SK-N-SH (cell line): ENCODE measurements at regions of chr4 and their contacts with region 1.

Region 1: DNA sequence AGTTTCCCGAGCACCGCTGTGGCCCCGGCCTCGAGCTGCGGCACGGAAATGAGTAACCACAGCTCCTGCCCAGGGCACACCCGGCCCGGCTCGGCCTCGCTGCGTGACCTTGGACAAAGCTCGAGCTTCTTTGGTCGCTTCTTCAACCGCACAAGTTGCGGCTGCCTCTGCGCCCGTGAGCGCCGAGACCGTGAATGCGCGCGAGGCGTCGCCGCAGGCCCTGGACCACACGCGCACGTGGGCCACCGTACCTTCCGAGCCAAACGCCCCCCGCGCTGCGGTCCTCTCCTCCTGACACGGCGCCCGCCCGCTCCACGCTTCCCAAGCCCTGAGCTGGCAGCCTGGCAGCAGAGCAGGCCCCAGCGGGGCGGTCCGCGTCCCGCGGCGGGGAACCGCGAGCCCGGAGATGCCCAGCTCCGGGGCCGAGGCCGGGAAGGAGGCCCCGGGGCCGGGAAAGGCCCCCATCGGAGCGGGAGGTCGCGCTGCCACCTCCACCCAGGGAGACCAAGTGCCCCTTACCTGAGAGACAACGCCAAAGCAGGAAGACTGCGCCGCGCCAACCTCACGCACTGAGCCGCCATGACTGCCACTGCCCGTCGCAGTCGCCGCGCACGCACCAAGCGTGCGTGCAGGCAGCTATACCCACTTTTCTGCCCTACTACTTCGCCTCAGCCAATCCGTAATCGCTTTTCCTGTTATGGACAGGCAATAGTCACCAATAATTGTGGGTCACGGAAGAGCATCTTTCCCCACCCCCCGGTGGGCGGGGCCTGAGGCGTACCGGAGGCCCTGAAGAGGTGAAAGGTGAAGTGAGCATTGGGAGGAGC is at the start of gene GRPEL1:
- DNase-seq: peak; percentile 99
- H3K4me3 ChIP-seq: peak within 1 kb of the TSS; percentile 86 to 91
- H3K27ac ChIP-seq: peak within 1 kb of the TSS; percentile 72 to 80
- H3K4me1 ChIP-seq: peaks cover 0 to 17% of the 10 kb centered on the region in 2 experiments; a peak in 2 of 4 replicates
- H3K27me3 ChIP-seq: no peaks in the 10 kb centered on the region
- CTCF ChIP-seq: no peak
- EP300 ChIP-seq: no peak
- RAD21 ChIP-seq: no peak
- polyA plus RNA-seq, gene GRPEL1: 29.8 and 32.8 TPM in 2 replicates

Region 2: GRCh38 chr4:6859543-6859942 is 208.1 kb before region 1 on chr4:
- CTCF ChIA-PET with region 1: no interaction called
- POLR2A ChIA-PET with region 1: no interaction called
- DNase-seq: no peak
- H3K4me3 ChIP-seq: no peak overlapping the region
- H3K27ac ChIP-seq: no peak overlapping the region
- H3K4me1 ChIP-seq: peaks cover 5 to 7% of the 10 kb centered on the region in 2 experiments; a peak in 3 of 4 replicates
- H3K27me3 ChIP-seq: no peaks in the 10 kb centered on the region
- CTCF ChIP-seq: no peak
- EP300 ChIP-seq: no peak
- RAD21 ChIP-seq: no peak

Region 3: DNA sequence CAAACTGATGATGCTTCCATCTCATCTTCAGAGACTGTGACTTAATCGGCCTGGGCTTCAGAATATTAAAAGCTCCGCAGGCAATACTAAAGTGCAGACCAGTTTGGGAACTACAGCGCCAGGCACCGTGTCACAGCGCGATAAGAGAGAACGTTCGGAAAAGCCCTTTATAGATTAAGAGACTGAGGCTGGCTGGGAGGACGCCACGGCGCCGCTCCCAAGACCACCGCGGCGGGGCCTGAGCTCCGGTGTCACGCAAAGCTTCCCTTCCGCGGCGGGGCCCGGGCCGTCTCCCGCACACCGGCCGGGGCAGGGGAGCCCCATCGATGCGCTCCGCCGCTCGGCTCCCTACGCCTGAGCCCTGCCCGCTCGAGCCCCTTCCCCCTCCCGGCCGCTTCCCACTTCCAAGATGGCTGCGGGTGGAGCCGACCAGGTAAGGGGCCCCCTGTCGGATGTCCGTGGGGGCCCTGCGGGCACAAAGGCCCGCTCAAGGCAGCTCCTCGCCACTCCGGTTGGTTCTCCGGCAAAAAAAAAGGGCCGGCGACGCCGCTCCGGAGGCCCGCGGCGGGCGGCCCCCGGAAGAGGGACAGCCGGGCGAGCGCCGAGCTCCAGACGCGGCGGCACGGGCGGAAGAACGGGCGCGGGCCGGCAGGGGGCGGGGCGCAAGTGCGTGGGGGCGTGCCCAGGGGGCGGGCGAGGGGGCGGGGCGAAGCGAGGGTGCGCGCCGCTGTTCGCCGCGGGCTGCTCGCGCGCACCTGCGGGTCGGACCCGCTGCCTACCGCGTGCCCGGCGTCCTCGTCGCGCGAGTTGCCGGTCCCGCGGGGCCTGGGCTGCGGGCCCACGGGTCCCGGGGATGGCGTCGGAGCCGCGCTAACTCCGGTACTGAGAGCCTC is 158.3 kb before region 1 on chr4 and contains the start of gene TBC1D14:
- CTCF ChIA-PET with region 1: interaction called, 24 read pairs
- POLR2A ChIA-PET with region 1: interaction called, 8 read pairs
- DNase-seq: peak; percentile 98
- H3K4me3 ChIP-seq: peak within 1 kb of the TSS; percentile 83 to 91
- H3K27ac ChIP-seq: peak within 1 kb of the TSS; percentile 93 to 95
- H3K4me1 ChIP-seq: peaks cover 0 to 26% of the 10 kb centered on the region in 2 experiments; a peak in 1 of 4 replicates
- H3K27me3 ChIP-seq: no peaks in the 10 kb centered on the region
- CTCF ChIP-seq: peak; percentile 31
- EP300 ChIP-seq: no peak; a peak in 1 of 4 replicates
- RAD21 ChIP-seq: no peak
- polyA plus RNA-seq, gene TBC1D14: 39.5 and 42.6 TPM in 2 replicates

Region 4: DNA sequence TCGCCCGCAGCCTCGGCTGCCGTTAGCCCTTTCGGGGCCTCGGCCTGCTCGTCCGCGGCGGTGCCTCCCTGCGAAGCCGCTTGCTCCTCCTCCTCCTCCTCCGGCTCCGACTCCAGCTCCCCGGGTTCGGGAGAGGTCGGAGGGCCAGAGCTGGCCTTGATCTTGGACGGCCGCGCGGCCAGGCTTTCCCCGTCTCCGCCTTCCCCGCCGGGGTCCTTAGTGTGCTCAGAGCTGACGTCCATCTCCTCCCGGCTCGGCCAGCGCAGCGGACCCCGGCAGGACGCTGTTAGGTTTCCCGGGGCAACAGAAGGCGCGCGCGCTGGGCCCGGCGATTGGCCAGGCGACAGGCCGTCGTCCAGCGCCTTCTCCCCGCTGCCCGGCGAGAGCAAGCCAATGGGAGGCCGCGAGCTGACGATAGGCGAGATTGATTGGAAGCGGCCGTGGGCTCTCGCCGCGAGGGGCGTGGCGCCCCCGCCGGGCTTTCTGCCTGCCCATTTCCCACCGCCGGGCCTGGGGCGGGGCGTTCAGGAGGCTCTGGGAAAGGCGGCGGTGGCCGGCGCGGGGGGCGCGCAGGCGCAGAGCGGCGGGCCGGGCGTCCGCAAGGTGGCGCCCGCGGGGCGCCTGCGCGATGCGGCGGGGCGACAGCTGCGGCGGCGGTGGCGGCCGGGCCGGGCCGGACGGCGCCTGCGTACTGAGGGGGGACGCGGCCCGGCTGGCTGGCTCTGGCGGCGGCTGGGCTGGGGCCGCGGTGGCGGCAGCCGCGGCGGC is 24.8 kb before region 1 on chr4 and contains the start of gene TADA2B:
- CTCF ChIA-PET with region 1: interaction called, 80 read pairs
- POLR2A ChIA-PET with region 1: interaction called, 14 read pairs
- DNase-seq: peak; percentile 100
- H3K4me3 ChIP-seq: peak within 1 kb of the TSS; percentile 92 to 96
- H3K27ac ChIP-seq: peak within 1 kb of the TSS; percentile 83 to 88
- H3K4me1 ChIP-seq: peaks cover 15 to 29% of the 10 kb centered on the region in 2 experiments
- H3K27me3 ChIP-seq: no peaks in the 10 kb centered on the region
- CTCF ChIP-seq: peak; percentile 22
- EP300 ChIP-seq: 0 out of 4 replicates have a peak, but pooled peaks of 1 of the 2 experiments have one; percentile 11
- RAD21 ChIP-seq: no peak; the same call in 1 of the 2 replicates
- polyA plus RNA-seq, gene TADA2B: 6.0 and 8.0 TPM in 2 replicates

Region 5: DNA sequence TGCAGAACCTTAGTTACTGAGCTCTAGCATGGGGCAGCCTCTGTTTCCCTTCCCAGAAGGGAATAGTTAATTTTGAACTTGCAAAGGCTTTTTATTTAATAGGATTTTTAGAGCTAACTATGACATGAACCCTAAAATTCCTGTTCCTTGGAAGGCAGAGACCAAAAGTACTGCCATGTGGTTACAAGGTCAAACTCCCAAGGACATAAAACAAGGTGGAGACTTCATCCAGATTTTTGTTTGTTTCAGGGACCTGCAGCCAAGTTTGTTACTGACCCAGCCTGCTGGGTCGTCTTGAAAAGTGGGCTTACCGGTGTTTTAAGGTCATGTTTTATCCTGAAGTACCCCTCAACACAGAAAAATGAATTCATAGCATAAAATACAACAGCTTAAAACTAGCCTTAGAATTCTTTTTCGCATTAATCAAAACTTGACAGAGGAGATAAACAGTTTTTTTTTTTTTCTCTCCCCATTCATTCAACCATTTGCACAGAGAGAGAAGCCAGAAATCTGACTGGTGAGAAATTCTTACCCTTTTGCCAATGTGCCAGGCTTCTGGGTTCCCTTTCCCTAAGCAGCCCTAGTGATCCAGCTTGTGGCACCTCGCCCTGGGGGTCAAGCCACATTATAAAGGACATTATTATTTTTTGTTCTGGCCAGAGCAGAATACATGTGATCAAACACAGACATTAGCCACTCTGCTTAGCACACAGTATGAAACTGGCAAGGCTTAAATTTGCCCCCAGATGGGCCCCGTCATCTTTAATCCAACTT is 21.7 kb after region 1 on chr4:
- CTCF ChIA-PET with region 1: interaction called, 80 read pairs
- POLR2A ChIA-PET with region 1: no interaction called
- DNase-seq: no peak
- H3K4me3 ChIP-seq: no peak overlapping the region
- H3K27ac ChIP-seq: no peak overlapping the region
- H3K4me1 ChIP-seq: peaks cover 0 to 2% of the 10 kb centered on the region in 2 experiments; a peak in 1 of 4 replicates
- H3K27me3 ChIP-seq: no peaks in the 10 kb centered on the region; the same call in 1 of the 2 replicates
- CTCF ChIP-seq: no peak
- EP300 ChIP-seq: no peak
- RAD21 ChIP-seq: no peak

Region 6: DNA sequence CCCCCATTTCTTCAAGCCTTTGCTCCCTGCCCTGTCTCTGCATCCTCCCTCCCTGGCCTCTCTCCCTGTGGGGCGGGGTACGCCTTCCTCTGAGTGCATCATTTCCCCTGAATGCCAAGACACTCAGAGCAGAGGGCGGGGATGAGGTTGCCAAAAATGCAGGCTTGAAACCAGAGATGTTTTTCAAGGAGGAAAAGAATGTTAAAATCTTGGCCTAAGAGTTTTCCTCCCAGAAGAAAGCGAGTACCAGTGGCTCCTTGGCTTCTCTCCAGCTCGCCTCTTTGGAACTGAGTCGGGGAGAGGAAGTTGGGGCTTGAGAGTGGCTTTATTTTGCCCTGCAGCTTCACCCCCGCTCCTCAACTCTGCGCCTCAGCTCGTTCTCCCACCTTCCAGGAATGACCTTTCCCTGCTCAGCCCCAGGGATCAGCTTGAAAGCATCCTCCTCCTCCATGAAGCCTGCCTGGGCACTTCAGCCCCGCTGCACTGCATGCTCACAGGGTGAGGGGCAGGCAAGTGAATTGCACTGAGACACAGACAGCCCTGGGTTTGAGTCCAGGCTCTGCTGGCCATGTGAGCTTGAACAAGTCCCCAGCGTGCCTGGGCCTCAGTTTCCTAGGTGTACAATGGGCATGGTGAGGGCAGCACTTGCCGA is 67.2 kb after region 1 on chr4:
- CTCF ChIA-PET with region 1: no interaction called
- POLR2A ChIA-PET with region 1: no interaction called
- DNase-seq: no peak
- H3K4me3 ChIP-seq: no peak overlapping the region
- H3K27ac ChIP-seq: peak overlapping the region; percentile 7 to 38; a peak in 3 of 4 replicates
- H3K4me1 ChIP-seq: peaks cover 0 to 21% of the 10 kb centered on the region in 2 experiments; a peak in 1 of 4 replicates
- H3K27me3 ChIP-seq: no peaks in the 10 kb centered on the region
- CTCF ChIP-seq: no peak
- EP300 ChIP-seq: no peak
- RAD21 ChIP-seq: no peak